AG04449 (cell line): ENCODE measurements at regions of chr11 and their contacts with region 1.

Region 1: DNA sequence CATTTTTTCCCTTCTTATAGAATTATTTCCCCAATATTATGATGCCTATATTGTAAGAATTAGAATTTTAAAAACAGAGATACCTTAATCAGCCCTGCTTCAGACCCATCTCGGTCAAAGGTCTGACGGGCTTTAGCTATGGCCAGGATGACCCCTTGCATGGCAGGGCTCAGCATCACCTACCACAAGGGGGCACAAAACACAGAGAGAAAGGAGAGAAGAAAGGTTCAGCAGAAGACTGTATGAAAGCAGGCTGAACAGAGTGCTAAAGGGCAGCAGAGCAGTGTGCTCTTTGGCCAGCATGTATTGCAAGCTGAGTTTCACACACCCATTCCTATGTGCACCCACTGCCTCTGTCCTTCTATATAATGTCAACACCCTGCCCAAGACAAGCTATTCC is 26.8 kb downstream of the CLDN25 start:
- DNase-seq: no peak
- H3K4me3 ChIP-seq: no peak overlapping the region
- CTCF ChIP-seq: peak; percentile 45

Region 2: GRCh38 chr11:113817162-113817561 is 10.8 kb after region 1 on chr11:
- CTCF ChIA-PET with region 1: interaction called, 11 read pairs
- POLR2A ChIA-PET with region 1: no interaction called
- DNase-seq: peak; percentile 19
- H3K4me3 ChIP-seq: no peak overlapping the region
- CTCF ChIP-seq: no peak